ENCODE measurements at regions of chr10 and their contacts with region 1.

Region 1: GRCh38 chr10:122426829-122427228 is 27.6 kb upstream of the ARMS2 start:
- DNase-seq: no peak
- H3K4me3 ChIP-seq: no peak overlapping the region
- H3K27ac ChIP-seq: no peak overlapping the region
- H3K4me1 ChIP-seq: no peaks in the 10 kb centered on the region
- H3K27me3 ChIP-seq: no peaks in the 10 kb centered on the region
- CTCF ChIP-seq: no peak

Region 2: GRCh38 chr10:121900443-121901174 is 526.2 kb before region 1 on chr10:
- CTCF ChIA-PET with region 1: no interaction called
- POLR2A ChIA-PET with region 1: interaction called, 12 read pairs
- intact Hi-C with region 1: no loop called
- DNase-seq: no peak
- H3K4me3 ChIP-seq: no peak overlapping the region
- H3K27ac ChIP-seq: no peak overlapping the region
- H3K4me1 ChIP-seq: no peaks in the 10 kb centered on the region
- H3K27me3 ChIP-seq: no peaks in the 10 kb centered on the region
- CTCF ChIP-seq: peak; percentile 74

Region 3: GRCh38 chr10:122441961-122442360 is 15.1 kb after region 1 on chr10:
- CTCF ChIA-PET with region 1: no interaction called
- POLR2A ChIA-PET with region 1: interaction called, 15 read pairs
- intact Hi-C with region 1: no loop called
- DNase-seq: peak; percentile 37 to 42
- H3K4me3 ChIP-seq: no peak overlapping the region
- H3K27ac ChIP-seq: no peak overlapping the region
- H3K4me1 ChIP-seq: no peaks in the 10 kb centered on the region
- H3K27me3 ChIP-seq: no peaks in the 10 kb centered on the region
- CTCF ChIP-seq: no peak